Activated naive CD4-positive, alpha-beta T cell treated with anti-CD3 and anti-CD28 coated beads, Interleukin-2, amount 10 ng/mL, durations not matched to agents 7 days and 5 days (primary cell): ENCODE measurements at regions of chr3 and their contacts with region 1.

Region 1: GRCh38 chr3:48507351-48508061 is 3.5 kb upstream of the SHISA5 start:
- DNase-seq: peak; percentile 86
- H3K4me3 Mint-ChIP-seq: no peak overlapping the region
- H3K27ac Mint-ChIP-seq: peak overlapping the region; percentile 87
- H3K4me1 Mint-ChIP-seq: peaks cover 64% of the 10 kb centered on the region
- H3K27me3 Mint-ChIP-seq: peaks cover 32% of the 10 kb centered on the region

Region 2: GRCh38 chr3:48432411-48433372 is 74.8 kb before region 1 on chr3:
- CTCF ChIA-PET with region 1: interaction called, 74 read pairs
- DNase-seq: peak; percentile 33
- H3K4me3 Mint-ChIP-seq: no peak overlapping the region
- H3K27ac Mint-ChIP-seq: no peak overlapping the region
- H3K4me1 Mint-ChIP-seq: peaks cover 27% of the 10 kb centered on the region
- H3K27me3 Mint-ChIP-seq: peaks cover 25% of the 10 kb centered on the region

Region 3: GRCh38 chr3:48446425-48447193 is 60.9 kb before region 1 on chr3 and contains the start of gene ATRIP:
- CTCF ChIA-PET with region 1: interaction called, 10 read pairs
- DNase-seq: peak; percentile 92
- H3K4me3 Mint-ChIP-seq: peak within 1 kb of the TSS; percentile 88
- H3K27ac Mint-ChIP-seq: peak within 1 kb of the TSS; percentile 89
- H3K4me1 Mint-ChIP-seq: peaks cover 51% of the 10 kb centered on the region
- H3K27me3 Mint-ChIP-seq: no peaks in the 10 kb centered on the region

Region 4: DNA sequence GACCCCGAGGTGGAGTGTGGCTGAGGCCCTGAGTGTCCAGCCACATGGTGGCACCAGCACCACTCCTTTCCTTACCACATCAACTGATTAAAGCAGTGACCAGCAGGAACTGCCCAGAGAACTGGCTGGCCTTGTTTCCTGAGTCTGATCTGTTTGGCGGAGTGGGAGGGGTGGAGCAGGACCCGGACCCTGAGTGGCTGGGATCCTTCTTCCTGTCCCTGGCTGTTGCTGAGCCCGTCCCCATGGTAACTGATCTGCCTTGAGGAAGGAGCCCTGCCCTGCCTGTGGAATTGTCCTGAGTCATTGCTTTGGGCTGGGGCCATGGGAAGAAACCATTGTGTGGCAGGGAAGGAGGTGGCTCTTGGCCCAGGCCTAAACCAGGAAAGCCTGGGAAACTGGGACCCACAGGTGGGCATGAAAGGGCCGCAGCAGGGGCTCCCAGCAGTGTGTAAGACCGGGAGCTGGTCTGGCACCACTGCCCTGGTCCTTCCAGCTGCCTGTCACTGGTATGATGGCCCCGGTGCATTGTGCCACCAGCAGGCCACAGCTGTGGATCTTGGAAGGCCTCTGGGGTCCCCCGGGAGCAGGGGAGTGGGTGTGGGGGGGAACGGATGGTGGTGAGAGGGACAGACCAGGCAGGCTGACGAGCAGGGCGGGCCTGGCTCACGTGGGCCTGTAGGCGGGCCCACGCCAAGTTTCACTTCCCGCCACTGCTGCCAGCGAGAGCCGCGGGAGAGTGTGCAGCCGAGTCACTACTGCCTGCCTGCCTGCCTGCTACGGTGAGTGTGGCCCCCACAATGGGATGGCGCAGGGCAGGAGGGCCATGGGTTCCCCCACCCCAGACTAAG is 41.8 kb before region 1 on chr3:
- CTCF ChIA-PET with region 1: interaction called, 25 read pairs
- DNase-seq: peak; percentile 88
- H3K4me3 Mint-ChIP-seq: peak overlapping the region; percentile 93
- H3K27ac Mint-ChIP-seq: peak overlapping the region; percentile 91
- H3K4me1 Mint-ChIP-seq: peaks cover 58% of the 10 kb centered on the region
- H3K27me3 Mint-ChIP-seq: no peaks in the 10 kb centered on the region

Region 5: GRCh38 chr3:48472915-48473616 is 34.4 kb before region 1 on chr3:
- CTCF ChIA-PET with region 1: interaction called, 25 read pairs
- DNase-seq: peak; percentile 97
- H3K4me3 Mint-ChIP-seq: peak overlapping the region; percentile 80
- H3K27ac Mint-ChIP-seq: peak overlapping the region; percentile 97
- H3K4me1 Mint-ChIP-seq: peaks cover 76% of the 10 kb centered on the region
- H3K27me3 Mint-ChIP-seq: no peaks in the 10 kb centered on the region

Region 6: GRCh38 chr3:48784426-48785120 is 277.1 kb after region 1 on chr3:
- CTCF ChIA-PET with region 1: no interaction called
- DNase-seq: no peak
- H3K4me3 Mint-ChIP-seq: no peak overlapping the region
- H3K27ac Mint-ChIP-seq: no peak overlapping the region
- H3K4me1 Mint-ChIP-seq: peaks cover 12% of the 10 kb centered on the region
- H3K27me3 Mint-ChIP-seq: no peaks in the 10 kb centered on the region